Dorsolateral prefrontal cortex (tissue), 120 donors: ENCODE measurements at regions of chr14 and their contacts with region 1.

Region 1: DNA sequence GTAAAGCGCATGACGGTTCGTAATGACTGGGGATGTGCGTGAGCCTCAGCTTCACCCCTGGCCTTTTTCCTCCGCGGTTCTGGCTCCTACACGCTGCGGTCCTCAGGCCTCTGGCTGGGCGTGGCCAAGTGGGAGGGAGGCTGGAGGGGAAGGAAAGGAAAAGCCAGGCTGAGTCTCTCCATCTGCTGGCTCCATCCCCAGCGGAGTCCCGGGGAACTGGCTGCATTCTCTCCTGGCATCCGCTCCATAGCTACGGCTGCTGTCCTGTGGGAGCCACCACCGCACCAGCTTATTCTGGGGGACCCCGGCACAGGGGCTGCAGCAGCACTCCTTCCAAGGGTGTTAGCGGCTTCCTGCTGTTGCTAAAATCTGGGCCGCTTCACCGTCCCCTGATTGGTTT is 68.2 kb upstream of the SLC24A4 start:
- DNase-seq: peak in 8 of 10 donors; percentile 35 to 83 (median 59)
- H3K4me3 ChIP-seq: peak overlapping the region in 31 of 59 donors; percentile 7 to 57 (median 27)
- H3K27ac ChIP-seq: peak overlapping the region in 1 of 59 donors; percentile 14
- H3K27me3 ChIP-seq: peaks cover 0 to 21% (median 0%) of the 10 kb centered on the region in 45 donors
- CTCF ChIP-seq: no peak

Region 2: GRCh38 chr14:92224358-92224954 is 30.3 kb before region 1 on chr14:
- intact Hi-C with region 1: loop called in 1 of 2 experiments (anchors 2 kb)
- DNase-seq: no peak
- H3K4me3 ChIP-seq: no peak overlapping the region
- H3K27ac ChIP-seq: no peak overlapping the region
- H3K27me3 ChIP-seq: no peaks in the 10 kb centered on the region
- CTCF ChIP-seq: no peak

Region 3: DNA sequence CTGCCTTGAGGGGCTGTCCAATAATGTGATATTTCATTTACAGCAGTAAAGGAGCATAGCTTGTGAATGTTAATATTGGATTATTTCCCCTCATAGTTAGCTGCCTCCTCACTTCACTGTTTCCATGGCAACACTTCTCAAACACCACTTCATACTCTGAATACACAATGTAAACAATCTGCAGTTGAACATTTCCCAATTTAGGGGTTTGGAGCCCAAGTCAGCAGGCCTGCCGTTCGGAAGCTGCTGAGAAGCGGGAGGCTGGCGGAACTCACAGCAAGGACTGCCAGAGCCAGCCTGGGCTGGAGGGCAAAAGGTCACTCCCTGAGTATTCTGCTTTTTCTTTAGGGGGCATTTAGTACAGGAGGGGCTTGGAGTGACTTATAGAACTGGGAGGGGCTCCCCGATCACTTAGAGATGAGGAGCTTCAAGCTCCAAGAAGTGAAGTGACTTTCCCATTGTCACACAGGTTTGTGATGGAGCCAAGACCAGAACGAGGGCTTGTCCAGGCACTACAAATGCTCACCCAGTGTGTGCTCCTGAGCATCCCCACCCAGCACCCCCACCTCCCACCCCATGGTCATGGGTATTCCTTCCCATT is 56.1 kb after region 1 on chr14:
- intact Hi-C with region 1: loop called in 1 of 2 experiments (anchors 5 kb)
- DNase-seq: peak in 1 of 10 donors; percentile 30
- H3K4me3 ChIP-seq: no peak overlapping the region
- H3K27ac ChIP-seq: peak overlapping the region in 34 of 59 donors; percentile 2 to 78 (median 34)
- H3K27me3 ChIP-seq: no peaks in the 10 kb centered on the region
- CTCF ChIP-seq: no peak